ENCODE measurements at regions of chr19 and their contacts with region 1.

Region 1: GRCh38 chr19:55526216-55527196 is 10.4 kb downstream of the SBK2 start:
- DNase-seq: no peak
- ATAC-seq: peak; percentile 88
- H3K4me3 ChIP-seq: 0 out of 4 replicates have a peak overlapping the region, but pooled peaks of 1 of the 2 experiments have one; percentile 5
- H3K27ac ChIP-seq: 0 out of 2 replicates have a peak overlapping the region, but pooled peaks have one; percentile 11
- H3K4me1 ChIP-seq: peaks cover 21% of the 10 kb centered on the region
- H3K27me3 ChIP-seq: no peaks in the 10 kb centered on the region
- CTCF ChIP-seq: no peak

Region 2: DNA sequence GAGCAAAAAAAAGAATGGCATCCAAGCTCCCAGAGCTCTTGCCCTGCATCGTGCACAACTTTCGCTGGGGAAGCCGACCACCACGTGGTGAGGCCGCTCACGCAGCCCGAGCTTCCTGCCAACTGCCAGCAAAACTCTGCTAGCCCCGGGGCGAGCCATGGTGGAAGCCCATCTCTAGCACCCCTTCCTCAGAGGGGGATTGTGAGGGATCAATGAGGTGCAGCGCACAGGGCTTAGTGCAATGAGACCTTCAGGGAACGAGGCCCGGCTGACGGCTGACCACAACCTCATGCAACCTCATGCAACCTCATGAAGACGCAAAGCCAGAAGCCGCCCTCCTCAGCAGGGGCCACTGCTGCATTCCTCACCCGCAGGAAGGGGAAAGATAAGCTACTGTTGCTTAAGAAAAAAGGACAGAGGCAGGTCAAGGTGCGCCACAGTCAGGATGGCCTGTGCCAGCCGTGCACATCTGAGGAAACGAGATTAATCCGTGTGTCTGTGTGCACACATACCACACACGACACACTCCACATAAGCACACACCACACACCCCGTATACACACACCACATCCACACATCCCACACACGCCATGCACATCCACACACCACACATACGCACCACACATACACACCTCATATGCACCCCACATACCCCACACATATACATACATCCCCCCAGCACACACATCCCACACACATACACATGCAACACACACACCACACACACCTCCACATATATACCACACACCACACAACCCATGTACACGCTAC is 256.1 kb before region 1 on chr19:
- CTCF ChIA-PET with region 1: no interaction called
- POLR2A ChIA-PET with region 1: no interaction called
- in situ Hi-C with region 1: no loop called
- intact Hi-C with region 1: no loop called
- DNase-seq: no peak
- ATAC-seq: no peak; the same call in 1 of the 2 replicates
- H3K4me3 ChIP-seq: no peak overlapping the region
- H3K27ac ChIP-seq: no peak overlapping the region
- H3K4me1 ChIP-seq: no peaks in the 10 kb centered on the region
- H3K27me3 ChIP-seq: no peaks in the 10 kb centered on the region
- CTCF ChIP-seq: no peak

Region 3: DNA sequence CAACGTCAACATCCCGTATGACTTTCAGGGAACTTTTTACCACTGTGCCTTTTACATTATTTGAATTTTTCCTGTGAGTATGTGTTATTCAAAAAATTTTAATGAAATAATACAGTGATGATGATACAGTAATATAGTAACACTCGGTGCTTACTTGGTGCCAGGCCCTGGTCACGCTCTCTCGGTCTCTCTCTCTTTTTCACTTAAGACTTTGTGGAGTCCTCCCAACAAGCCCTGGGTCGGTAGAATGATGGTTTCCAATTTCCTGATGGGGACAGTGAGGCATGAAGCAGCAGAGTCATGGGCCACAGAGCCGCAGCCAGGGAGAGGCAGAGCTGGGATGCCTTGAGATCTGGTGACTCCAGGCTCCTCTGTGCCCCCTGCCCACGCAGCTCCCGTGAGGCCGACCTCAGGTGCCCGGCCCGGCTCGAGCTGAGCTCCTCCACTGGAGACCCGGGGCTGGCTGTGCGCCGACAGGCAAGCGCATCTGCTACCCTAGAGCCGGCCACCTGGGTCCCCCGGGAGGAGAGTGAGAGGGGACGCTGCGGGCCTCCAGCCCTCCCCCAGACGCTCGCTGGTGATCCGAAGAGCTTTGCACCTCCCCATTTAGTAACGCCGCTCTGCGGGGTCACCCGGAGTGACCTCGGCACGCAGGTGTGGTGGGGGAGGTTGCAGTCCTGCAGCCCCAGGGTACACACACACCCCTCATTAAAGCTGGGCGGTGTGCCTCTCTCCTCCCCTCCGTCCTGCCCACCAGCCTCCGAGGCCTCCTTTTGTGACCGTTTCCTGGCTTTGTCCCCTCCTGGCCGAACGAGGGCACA is 23.2 kb after region 1 on chr19:
- CTCF ChIA-PET with region 1: no interaction called
- POLR2A ChIA-PET with region 1: no interaction called
- in situ Hi-C with region 1: no loop called
- intact Hi-C with region 1: no loop called
- DNase-seq: peak; percentile 87
- ATAC-seq: peak; percentile 69
- H3K4me3 ChIP-seq: peak overlapping the region; percentile 37 to 48
- H3K27ac ChIP-seq: peak overlapping the region; percentile 94
- H3K4me1 ChIP-seq: peaks cover 62% of the 10 kb centered on the region
- H3K27me3 ChIP-seq: no peaks in the 10 kb centered on the region
- CTCF ChIP-seq: no peak

Region 4: GRCh38 chr19:55586976-55587668 is 60.6 kb after region 1 on chr19:
- CTCF ChIA-PET with region 1: no interaction called
- POLR2A ChIA-PET with region 1: interaction called, 20 read pairs
- in situ Hi-C with region 1: no loop called
- intact Hi-C with region 1: no loop called
- DNase-seq: peak; percentile 67
- ATAC-seq: peak; percentile 91
- H3K4me3 ChIP-seq: peak overlapping the region; percentile 51 to 79
- H3K27ac ChIP-seq: peak overlapping the region; percentile 52
- H3K4me1 ChIP-seq: peaks cover 12% of the 10 kb centered on the region
- H3K27me3 ChIP-seq: no peaks in the 10 kb centered on the region
- CTCF ChIP-seq: no peak